Activated B cell treated with CpG ODN at 0.5 μM for 24 hours (primary cell): ENCODE measurements at regions of chr1 and their contacts with region 1.

Region 1: DNA sequence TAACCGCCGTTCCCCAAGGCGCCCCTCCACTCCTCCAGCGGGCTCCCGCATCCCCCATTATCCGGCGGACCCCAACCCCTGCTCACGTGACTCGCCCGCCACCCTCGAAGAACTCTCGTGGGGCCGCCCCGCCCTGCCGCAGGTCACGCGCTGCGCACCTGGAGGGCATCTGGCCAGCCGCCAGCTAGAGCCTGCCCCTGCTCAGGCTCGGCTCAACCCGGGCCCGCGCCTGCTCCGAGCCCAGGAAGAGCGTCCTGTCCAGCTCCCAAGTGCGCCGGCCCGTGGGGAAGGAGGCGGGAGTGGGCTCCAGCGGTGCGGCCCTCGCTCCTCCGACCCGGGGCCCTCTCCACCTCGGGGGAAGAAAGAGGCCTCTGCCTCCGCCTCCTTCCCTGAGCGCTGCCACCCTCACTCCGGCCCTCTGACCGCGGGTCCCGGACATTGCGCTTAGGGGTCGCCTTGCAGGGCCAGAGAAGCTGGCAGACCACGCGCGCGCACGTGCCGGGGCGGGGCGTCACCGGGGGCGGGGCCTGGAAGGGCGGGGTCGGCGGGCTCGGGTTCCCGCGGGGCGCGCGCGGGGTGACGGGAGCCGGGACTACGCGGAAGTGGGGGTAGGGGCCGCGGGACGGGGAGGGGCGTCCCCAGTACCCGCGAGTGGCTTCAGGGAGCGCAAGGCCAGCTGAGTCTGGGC is 28.4 kb downstream of the HMGN2 start:
- DNase-seq: peak; percentile 94
- ATAC-seq: peak; percentile 77
- H3K4me3 Mint-ChIP-seq: peak overlapping the region; percentile 90
- H3K27ac Mint-ChIP-seq: peak overlapping the region; percentile 93
- H3K4me1 Mint-ChIP-seq: peaks cover 8% of the 10 kb centered on the region
- H3K27me3 Mint-ChIP-seq: no peaks in the 10 kb centered on the region
- CTCF ChIP-seq: no peak

Region 2: DNA sequence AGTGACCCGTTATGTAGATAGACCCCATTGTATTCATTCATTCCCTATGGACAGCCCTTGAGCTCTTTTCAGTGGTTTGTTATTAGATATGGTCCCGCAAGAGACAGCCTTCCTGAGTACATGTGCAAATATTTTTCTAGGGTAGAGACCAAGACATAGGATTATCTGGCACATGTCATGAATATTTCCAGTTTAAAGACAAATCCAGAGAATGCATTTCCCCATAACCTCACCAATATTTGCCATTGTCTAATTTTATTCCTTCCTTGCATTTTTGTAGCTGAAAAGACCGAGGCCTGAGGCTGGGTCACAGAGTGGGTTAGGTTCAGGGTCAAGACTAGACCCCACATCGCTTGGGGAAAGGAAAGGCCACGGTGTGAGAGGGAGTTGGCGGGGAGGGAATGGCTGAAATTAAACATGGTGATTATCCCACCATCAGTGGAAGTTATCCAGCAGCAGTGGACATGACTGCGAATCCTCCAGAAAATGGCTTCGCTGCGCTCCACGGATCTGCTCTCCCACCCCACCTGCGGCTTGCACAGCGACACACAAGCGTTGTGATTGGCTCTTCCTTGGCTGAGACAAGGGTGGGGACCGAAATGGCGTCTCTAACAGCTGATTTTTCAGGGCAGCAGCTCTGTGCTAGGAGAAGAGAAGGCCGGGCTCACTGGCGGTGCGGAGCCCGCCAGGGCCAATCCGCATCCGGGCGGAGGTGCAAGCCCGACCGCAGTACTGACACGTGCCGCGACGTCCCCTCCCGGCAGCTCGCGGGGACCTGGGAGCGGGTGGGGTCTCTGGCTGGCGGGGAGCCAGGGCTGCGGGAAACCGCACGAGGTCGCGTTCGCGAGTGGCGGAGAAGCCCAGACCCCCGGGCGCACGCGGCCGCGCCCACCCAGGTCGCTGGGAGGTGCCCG is 578.3 kb before region 1 on chr1:
- CTCF ChIA-PET with region 1: no interaction called
- POLR2A ChIA-PET with region 1: no interaction called
- intact Hi-C with region 1: no loop called
- DNase-seq: peak; percentile 29
- ATAC-seq: peak; percentile 31
- H3K4me3 Mint-ChIP-seq: peak overlapping the region; percentile 80
- H3K27ac Mint-ChIP-seq: no peak overlapping the region
- H3K4me1 Mint-ChIP-seq: peaks cover 13% of the 10 kb centered on the region
- H3K27me3 Mint-ChIP-seq: peaks cover 34% of the 10 kb centered on the region
- CTCF ChIP-seq: no peak

Region 3: DNA sequence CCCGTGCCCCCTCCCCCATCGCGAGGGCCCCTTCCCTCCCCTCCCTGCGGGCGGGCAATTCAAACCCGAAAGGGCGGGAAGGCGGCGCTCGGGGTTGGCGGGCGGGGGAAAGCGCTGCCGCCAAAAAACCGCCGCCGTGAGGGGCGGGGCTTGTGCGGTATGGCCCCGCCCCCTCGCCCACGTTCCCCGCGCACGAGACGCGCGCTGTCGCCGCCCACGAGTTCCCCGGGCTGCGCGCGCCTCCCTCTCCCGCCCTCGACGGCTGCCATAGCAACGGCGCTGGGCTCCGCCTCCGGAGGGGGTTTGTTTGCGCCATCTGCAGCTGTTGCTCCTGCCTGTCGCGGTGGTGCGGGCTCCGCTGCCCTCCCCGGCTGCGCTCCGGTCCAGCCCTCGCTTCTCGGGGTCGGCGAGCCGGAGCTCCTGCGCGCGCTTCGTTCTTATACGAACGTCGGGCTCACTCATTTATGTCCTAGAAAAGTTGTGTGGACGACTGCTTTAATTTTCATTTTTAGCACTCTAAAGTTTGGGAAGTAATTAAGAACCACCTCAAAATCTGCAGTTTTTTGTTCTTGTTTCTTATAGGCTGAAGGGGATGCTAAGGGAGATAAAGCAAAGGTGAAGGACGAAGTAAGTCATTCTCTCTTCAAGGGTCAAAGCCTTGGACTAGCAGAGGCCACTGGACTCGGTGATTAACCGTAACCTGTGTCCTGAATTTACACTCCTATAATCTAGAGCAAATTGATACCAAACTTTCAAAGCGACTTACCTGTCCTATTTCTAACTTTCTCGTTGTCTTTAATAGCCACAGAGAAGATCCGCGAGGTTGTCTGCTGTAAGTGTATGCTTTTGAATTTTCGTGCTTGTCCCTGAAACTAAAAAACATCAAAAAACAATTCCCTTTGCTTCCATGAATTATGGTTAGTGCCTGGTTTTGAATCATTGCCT is 27.5 kb before region 1 on chr1:
- CTCF ChIA-PET with region 1: interaction called, 4 read pairs
- POLR2A ChIA-PET with region 1: interaction called, 47 read pairs
- intact Hi-C with region 1: loop called (anchors 1 kb)
- DNase-seq: peak; percentile 95
- ATAC-seq: peak; percentile 78
- H3K4me3 Mint-ChIP-seq: peak overlapping the region; percentile 88
- H3K27ac Mint-ChIP-seq: peak overlapping the region; percentile 84
- H3K4me1 Mint-ChIP-seq: peaks cover 58% of the 10 kb centered on the region
- H3K27me3 Mint-ChIP-seq: no peaks in the 10 kb centered on the region
- CTCF ChIP-seq: no peak

Region 4: GRCh38 chr1:26535201-26535600 is 34.6 kb after region 1 on chr1:
- CTCF ChIA-PET with region 1: interaction called, 30 read pairs
- POLR2A ChIA-PET with region 1: interaction called, 115 read pairs
- intact Hi-C with region 1: no loop called
- DNase-seq: no peak
- ATAC-seq: no peak
- H3K4me3 Mint-ChIP-seq: no peak overlapping the region
- H3K27ac Mint-ChIP-seq: peak overlapping the region; percentile 8
- H3K4me1 Mint-ChIP-seq: peaks cover 67% of the 10 kb centered on the region
- H3K27me3 Mint-ChIP-seq: no peaks in the 10 kb centered on the region
- CTCF ChIP-seq: no peak

Region 5: DNA sequence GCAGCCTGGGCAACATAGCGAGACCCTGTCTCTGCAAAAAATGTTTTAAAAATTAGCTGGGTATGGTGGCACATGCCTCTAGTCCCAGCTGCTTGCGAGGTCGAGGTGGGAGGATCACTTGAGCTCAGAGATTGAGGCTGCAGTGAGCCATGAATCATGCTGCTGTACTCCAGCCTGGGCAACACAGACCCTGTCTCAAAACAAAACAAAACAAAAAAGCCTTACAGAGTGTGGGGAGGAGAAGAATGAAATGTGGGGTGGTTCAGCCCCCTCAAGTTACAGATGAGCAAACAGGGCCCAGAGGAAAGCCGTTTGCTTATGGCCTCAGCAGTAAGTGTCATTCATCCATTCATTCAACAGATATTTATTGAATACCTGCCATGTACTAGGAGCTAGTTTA is 69.7 kb after region 1 on chr1:
- CTCF ChIA-PET with region 1: no interaction called
- POLR2A ChIA-PET with region 1: interaction called, 12 read pairs
- intact Hi-C with region 1: no loop called
- DNase-seq: no peak
- ATAC-seq: no peak
- H3K4me3 Mint-ChIP-seq: no peak overlapping the region
- H3K27ac Mint-ChIP-seq: no peak overlapping the region
- H3K4me1 Mint-ChIP-seq: no peaks in the 10 kb centered on the region
- H3K27me3 Mint-ChIP-seq: no peaks in the 10 kb centered on the region
- CTCF ChIP-seq: no peak

Region 6: GRCh38 chr1:26677306-26678115 is 176.9 kb after region 1 on chr1:
- CTCF ChIA-PET with region 1: no interaction called
- POLR2A ChIA-PET with region 1: interaction called, 3 read pairs
- intact Hi-C with region 1: loop called (anchors 1 kb)
- DNase-seq: peak; percentile 32
- ATAC-seq: peak; percentile 99
- H3K4me3 Mint-ChIP-seq: peak overlapping the region; percentile 59
- H3K27ac Mint-ChIP-seq: peak overlapping the region; percentile 83
- H3K4me1 Mint-ChIP-seq: peaks cover 14% of the 10 kb centered on the region
- H3K27me3 Mint-ChIP-seq: no peaks in the 10 kb centered on the region
- CTCF ChIP-seq: no peak

Region 7: DNA sequence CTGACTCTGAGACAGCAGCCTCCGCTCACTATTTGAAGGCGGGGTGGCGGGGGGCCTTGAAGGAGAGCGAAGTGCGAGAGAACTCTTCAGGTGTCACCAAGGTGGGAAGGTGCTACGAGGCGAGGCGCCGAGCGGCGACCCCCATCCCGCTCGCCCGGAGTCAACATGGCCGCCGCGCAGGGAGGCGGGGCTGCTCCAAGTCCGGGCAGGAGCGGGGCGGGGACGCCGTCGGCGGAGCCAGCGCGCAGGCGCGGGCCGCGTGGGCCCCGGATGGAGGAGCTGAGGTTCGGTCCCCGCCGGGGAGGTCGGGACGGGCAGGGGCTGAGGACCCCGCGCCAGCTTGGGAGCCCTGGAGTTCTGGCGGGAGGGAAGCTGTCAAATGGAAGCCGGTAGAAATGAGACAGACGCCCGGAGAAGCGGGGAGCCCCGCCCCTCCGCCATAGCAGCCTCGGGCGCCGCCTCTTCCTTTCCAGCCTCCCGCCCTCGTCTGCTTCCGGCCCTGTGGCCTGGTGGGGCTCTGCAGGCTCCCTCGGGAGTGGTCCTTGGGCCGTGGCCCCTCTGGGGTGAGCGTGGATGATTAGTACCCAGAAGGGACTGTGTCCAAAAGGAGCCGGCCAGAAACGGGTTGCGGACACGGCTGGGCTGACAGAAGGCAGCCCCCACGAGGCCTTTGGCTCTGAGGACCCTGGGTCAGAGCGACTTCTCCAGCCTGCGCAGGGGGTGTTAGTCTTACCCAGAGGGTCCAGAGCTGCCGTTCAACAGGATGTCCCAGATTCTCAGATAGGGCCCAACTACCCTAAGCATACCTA is 287.3 kb after region 1 on chr1 and contains the start of gene PIGV:
- CTCF ChIA-PET with region 1: interaction called, 9 read pairs
- POLR2A ChIA-PET with region 1: interaction called, 30 read pairs
- intact Hi-C with region 1: loop called (anchors 1 kb)
- DNase-seq: peak; percentile 94
- ATAC-seq: peak; percentile 70
- H3K4me3 Mint-ChIP-seq: peak within 1 kb of the TSS; percentile 98
- H3K27ac Mint-ChIP-seq: peak within 1 kb of the TSS; percentile 100
- H3K4me1 Mint-ChIP-seq: peaks cover 51% of the 10 kb centered on the region
- H3K27me3 Mint-ChIP-seq: no peaks in the 10 kb centered on the region
- CTCF ChIP-seq: no peak
- total RNA-seq, gene PIGV: 29.6 and 35.4 TPM in 2 replicates